Activated T-helper 2 cell treated with anti-CD3 and anti-CD28 coated beads, Interferon-gamma antibody, Interleukin-2, Interleukin-4, amounts not matched to agents 10 μg/mL and 5 μg/mL and 100 μg/mL, durations not matched to agents 14 hours and 24 hours and 36 hours (primary cell): ENCODE measurements at regions of chr1 and their contacts with region 1.

Region 1: DNA sequence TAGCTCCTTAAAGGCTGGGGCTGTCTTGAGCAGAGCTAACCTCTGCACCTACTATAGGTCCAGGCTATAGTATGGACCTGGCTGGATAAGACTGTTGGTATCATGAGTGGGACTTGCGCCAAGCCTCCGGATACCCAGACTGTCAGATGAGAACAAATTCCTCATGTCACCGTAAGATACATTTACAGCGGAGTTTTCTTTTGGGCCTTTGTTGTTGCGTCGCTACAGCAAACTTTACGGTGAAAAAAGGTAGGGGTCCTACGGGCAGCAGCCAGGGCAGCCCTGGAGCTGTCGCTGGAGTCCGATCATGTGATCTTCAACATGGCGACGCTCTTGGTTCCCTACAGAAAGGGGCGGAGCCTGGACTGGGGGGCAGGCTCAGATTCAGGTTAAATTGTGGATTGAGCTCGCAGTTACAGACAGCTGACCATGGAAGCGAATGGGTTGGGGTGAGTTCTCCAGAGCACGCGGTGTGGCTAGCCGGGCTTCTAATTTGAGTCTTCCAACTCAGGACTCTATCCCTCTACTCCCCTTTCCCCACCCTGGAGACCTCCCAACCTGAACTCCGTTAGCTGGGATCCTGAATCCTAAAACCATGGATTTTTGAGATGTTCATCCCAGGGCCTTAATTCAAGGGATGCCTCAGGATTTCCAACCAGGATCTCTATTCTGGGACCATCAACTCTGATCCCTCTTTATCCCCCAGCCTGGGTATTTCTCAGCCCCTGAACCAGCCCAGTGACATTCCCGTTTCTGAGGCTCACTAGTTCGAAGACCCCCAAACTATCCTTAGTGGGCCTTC is at the start of gene UROD:
- DNase-seq: peak; percentile 89
- H3K4me3 Mint-ChIP-seq: peak within 1 kb of the TSS; percentile 78
- H3K27ac Mint-ChIP-seq: peak within 1 kb of the TSS; percentile 92
- H3K4me1 Mint-ChIP-seq: peaks cover 34% of the 10 kb centered on the region
- H3K27me3 Mint-ChIP-seq: no peaks in the 10 kb centered on the region
- total RNA-seq, gene UROD: 84.8 and 85.9 TPM in 2 replicates

Region 2: DNA sequence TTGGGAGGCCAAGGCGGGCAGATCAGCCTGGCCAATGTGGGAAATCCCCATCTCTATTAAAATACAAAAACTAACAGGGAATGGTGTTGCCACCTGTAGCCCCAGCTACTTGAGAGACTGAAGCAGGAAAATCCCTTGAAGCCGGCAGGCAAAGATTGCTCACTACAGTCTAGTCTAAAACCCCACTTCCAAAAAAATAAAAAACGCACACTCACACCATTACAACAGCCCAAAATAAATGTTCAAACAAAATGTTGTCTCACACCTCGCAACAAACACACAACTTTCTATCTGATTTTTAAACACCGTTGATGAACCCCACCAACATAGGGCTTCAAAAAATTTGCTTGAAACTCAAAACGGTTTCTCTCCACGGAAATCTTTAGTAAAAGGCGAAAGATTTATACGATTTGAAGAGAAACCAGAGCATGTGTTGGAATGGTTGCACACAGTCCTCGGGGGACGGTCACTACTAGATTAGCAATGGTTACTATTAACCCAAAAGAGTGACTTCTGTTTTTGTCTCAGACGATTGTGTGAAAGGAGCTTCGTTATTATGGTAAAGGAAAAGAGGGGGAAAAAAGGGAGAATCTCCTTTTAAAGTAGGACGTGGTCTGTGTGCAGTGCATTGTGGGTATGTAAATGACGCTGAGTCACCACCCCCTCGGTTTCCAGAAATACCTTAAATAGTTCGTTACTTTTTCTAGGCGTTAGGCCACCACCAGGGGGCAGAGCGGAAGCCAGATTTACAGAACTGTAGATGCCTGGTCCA is 281.1 kb before region 1 on chr1 and contains the start of gene RNU5D-1:
- intact Hi-C with region 1: loop called (anchors 2 kb)
- DNase-seq: peak; percentile 88
- H3K4me3 Mint-ChIP-seq: peak within 1 kb of the TSS; percentile 70
- H3K27ac Mint-ChIP-seq: peak within 1 kb of the TSS; percentile 100
- H3K4me1 Mint-ChIP-seq: peaks cover 33% of the 10 kb centered on the region
- H3K27me3 Mint-ChIP-seq: no peaks in the 10 kb centered on the region
- total RNA-seq, gene RNU5D-1: not detected in 2 replicates

Region 3: DNA sequence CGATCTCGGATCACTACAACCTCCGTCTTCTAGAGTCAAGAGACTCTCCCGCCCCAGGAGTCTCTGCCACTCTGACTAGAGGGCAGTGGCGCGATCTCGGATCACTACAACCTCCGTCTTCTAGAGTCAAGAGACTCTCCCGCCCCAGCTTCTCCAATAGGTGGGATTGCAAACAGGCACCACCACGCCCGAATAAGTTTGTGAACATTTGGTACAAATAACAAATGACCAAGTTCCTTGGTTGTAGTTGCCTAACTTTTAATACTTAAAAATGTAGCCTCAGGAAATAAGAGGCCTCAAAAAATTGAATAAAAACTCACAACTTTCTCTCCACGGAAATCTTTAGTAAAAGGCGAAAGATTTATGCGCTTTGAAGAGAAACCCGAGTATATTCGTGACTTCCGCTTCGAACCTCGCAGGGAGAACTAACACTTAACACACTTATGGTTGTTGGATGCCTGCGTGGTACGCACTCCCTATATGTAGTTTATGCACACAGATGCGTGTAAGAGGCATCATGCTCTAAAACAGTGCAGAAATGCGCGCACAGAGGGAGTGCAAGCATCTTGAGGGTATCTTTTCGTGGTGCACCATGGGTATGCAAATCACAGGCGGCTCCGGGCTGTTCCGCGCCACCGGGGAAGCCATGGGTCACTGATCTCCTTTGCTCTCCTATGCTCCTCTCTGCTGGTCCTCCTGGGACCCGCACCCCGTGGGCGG is 192.3 kb before region 1 on chr1:
- intact Hi-C with region 1: loop called (anchors 5 kb)
- DNase-seq: peak; percentile 84
- H3K4me3 Mint-ChIP-seq: peak overlapping the region; percentile 88
- H3K27ac Mint-ChIP-seq: peak overlapping the region; percentile 98
- H3K4me1 Mint-ChIP-seq: peaks cover 35% of the 10 kb centered on the region
- H3K27me3 Mint-ChIP-seq: no peaks in the 10 kb centered on the region

Region 4: GRCh38 chr1:45205910-45206721 is 194.1 kb after region 1 on chr1 and contains the start of gene ZSWIM5:
- intact Hi-C with region 1: loop called (anchors 10 kb)
- DNase-seq: peak; percentile 46
- H3K4me3 Mint-ChIP-seq: peak within 1 kb of the TSS; percentile 80
- H3K27ac Mint-ChIP-seq: peak within 1 kb of the TSS; percentile 20
- H3K4me1 Mint-ChIP-seq: peaks cover 14% of the 10 kb centered on the region
- H3K27me3 Mint-ChIP-seq: peaks cover 51% of the 10 kb centered on the region
- total RNA-seq, gene ZSWIM5: 0.14 and 0.21 TPM in 2 replicates

Region 5: DNA sequence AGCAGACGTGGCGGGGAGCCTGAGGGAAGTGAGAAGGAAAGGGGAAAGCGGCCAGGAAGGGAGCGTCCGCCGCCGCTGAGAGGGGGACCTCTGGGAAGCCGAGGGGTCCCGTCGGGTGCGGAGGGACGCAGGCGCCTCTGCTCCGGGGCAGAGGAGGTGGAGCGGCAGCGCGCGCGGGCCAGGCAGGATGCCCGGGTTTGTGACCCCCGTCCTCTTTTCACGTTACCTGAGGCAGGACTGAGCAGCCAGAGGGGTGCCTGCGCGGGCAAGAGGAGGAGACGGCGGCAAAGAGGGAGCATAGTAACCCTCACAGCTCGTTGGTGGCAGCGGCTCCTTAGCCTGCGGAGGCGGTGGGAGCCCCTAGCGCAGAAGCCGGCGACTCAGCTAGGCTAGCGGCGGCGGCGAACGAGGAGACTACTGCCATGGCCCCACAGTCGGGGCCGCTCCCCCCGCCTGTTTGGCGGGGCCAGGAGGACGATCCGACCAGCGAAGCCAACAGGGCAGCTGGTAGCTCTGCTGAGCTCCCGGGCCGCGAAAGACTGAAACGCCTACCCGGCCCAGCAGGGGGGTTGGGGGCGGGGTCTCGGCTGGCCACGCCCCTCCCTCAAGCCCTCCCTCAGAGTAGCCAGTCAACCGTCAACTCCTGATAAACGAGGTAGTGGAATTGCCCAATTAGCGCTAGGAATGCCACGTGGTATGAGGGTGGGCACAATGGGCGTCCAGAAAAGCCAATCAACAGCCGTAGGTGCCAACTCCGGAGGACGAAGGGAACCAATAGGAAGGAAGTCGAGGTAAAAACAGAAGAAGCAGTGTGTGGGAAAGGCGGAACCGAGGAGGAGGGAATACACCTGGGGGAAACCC is 478.8 kb after region 1 on chr1 and contains the start of gene TESK2:
- intact Hi-C with region 1: loop called (anchors 1 kb)
- DNase-seq: peak; percentile 97
- H3K4me3 Mint-ChIP-seq: no peak within 1 kb of the TSS
- H3K27ac Mint-ChIP-seq: no peak within 1 kb of the TSS
- H3K4me1 Mint-ChIP-seq: peaks cover 9% of the 10 kb centered on the region
- H3K27me3 Mint-ChIP-seq: peaks cover 9% of the 10 kb centered on the region
- total RNA-seq, gene TESK2: 2.3 and 2.9 TPM in 2 replicates

Region 6: DNA sequence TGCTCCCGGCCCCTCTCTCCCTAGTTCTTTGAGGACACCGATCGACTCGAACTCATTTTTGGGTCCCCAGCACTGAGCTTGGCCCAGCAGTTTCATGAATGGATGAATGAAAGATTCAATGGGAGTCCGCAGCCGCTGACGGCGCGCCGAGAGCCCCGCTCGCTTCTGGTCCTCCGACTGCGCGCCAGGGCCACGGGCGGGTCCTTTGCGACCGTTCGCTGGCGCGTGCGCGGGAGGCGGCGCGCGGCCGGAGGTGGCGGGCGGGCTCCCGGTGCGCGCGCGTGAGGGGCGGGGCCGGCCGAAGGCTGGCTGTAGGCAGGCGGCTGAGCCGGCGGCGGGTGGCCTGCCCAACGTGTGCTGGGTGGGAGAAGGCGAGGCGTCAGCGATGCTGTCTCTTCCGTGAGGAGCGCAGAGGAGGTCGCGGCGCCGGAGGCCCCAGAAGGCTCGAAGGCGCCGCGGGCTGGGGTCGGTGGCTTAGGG is 791.3 kb after region 1 on chr1 and contains the start of gene MAST2:
- intact Hi-C with region 1: loop called (anchors 10 kb)
- DNase-seq: peak; percentile 83
- H3K4me3 Mint-ChIP-seq: peak within 1 kb of the TSS; percentile 95
- H3K27ac Mint-ChIP-seq: peak within 1 kb of the TSS; percentile 95
- H3K4me1 Mint-ChIP-seq: peaks cover 29% of the 10 kb centered on the region
- H3K27me3 Mint-ChIP-seq: no peaks in the 10 kb centered on the region
- total RNA-seq, gene MAST2: 33.4 and 38.6 TPM in 2 replicates